ENCODE measurements at regions of chr2 and their contacts with region 1.

Region 1: DNA sequence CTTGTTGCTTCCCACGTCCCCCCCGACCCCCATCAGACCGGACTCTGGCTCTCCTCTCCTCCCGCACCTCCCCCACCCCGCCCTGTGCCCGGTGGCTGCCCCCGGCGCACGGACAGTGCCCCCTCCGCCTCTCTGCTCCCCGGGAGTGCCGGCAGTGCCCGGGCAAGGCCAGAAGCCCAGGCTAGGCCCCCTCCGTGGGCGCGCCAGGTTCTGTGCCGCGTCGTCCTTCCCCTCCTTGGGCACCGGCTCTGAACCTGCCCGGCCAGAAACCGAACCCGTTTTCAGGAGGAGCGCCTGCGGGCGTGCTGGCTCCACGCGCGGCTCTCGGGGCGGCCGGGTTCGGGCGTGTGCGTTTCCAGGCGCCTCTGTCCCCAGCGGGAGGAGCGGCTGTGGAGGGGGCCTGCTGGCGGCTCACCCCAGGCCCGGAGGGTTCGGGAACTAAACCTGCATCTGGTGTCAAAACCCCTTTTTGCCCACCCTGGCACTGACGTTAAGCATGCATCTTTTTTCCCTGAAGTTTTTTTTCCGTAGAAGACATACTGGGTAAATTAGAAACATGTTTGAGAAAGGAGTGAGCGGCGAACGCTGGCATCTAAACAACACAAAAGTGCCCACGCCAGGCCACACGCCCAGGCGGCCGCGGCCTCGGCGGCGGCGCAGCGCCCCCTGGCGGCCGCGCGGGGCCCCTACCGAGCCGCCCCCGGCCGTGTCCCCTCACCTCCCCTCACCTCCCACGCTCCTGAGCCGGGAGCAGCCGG is 123.9 kb upstream of the SLC1A4 start:
- DNase-seq: peak; percentile 63
- H3K4me3 ChIP-seq: peak overlapping the region; percentile 44 to 54
- H3K27ac ChIP-seq: peak overlapping the region; percentile 86 to 87
- H3K4me1 ChIP-seq: peaks cover 4% of the 10 kb centered on the region
- H3K27me3 ChIP-seq: no peaks in the 10 kb centered on the region
- CTCF ChIP-seq: peak; percentile 73 to 99 (median 96)
- POLR2A ChIP-seq: no peak

Region 2: DNA sequence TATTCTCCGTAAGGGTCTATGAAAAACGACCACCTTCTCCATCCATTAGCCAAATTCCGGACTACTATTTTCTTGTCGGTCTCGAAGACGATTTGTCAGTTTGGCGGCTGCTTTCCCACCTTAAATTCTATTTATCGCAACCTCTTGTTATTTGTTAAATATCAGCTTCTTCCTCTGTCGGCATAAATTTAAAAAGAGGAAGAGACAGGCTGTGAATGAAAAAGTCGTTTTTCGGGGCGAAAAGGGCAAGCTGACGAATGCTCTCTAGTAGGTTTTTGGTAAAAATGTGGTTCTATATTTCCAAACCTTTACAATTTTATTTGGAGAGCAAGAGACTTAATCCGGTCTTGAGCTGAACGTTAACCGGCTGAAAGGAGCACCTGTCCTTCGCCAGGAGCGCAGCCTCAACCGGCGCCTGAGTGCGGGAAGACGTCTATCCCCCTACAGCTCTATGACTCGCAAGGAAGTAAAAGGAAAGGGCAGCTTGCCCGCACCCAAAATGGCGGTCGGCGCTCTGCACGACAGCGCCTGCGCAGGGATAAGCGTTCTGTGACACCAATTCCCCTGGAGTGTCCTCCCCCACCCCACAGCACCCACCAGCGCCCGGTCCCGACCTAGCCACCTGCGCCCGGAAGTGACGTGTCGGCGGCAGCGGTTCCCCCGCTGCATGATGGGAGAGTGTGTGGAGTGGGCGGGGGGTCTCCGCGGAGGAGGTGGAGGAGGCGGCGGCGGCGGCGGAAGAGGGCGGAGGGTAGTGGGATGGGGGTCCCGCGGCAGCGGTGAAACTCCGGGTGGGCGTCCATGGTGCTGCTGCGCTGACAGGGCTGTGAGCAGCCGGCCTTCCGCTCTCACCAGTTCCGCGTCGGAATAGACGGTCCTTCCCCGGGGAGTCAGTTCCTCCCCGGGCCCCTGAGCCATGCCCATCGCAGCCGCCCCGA is 341.3 kb before region 1 on chr2 and contains the start of gene AFTPH:
- intact Hi-C with region 1: loop called (anchors 2 kb)
- DNase-seq: peak; percentile 99
- H3K4me3 ChIP-seq: peak within 1 kb of the TSS; percentile 76 to 94
- H3K27ac ChIP-seq: peak within 1 kb of the TSS; percentile 92 to 95
- H3K4me1 ChIP-seq: no peaks in the 10 kb centered on the region
- H3K27me3 ChIP-seq: no peaks in the 10 kb centered on the region
- CTCF ChIP-seq: peak in 1 of 4 experiments; percentile 36
- POLR2A ChIP-seq: peak; percentile 92
- total RNA-seq, gene AFTPH: 61.3 to 68.1 TPM

Region 3: GRCh38 chr2:64586883-64587481 is 278.3 kb before region 1 on chr2:
- intact Hi-C with region 1: loop called (anchors 2 kb)
- DNase-seq: no peak
- H3K4me3 ChIP-seq: no peak overlapping the region
- H3K27ac ChIP-seq: no peak overlapping the region
- H3K4me1 ChIP-seq: no peaks in the 10 kb centered on the region
- H3K27me3 ChIP-seq: no peaks in the 10 kb centered on the region
- CTCF ChIP-seq: peak in 3 of 4 experiments; percentile 48 to 76 (median 71)
- POLR2A ChIP-seq: no peak

Region 4: DNA sequence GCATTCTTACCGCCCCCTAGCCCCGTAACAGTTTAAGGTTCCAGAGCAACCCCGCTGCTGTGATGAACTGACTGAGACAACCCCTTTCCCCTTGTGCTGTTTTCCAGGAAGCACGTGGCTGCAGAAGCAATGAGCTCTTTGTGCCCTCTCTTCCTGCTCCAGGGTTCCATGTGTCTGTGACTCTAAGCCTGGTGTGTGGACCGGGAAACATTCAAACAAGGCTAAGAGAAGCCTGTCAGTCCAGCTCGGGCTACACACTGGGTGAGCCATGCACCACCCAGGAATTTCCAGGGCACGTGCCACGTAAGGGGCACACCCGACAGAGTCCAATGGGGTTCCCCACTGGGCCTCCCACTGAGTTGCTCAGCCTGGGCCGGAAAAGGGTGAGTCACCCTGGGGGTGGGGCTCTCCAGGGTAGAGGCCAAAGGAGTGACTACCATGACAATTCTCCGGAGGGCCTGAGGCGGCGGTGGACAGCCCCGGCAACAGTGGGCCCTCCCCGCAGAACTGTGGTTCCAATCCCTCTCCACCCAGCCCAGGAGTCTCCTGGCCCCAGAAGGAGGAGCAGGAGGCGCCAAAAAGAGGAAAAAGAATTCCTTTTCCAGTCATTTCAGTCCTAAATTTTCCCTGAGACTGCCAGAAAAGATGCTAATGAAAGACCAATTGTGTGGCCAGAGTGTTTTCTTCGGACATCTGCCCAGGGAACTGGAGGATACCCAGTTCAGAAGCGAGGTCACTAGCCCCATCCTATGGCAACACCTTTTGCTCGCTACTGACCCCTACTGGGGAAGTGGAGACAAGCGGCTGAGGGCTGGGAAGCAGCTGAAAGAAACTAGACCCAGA is 33.9 kb before region 1 on chr2:
- intact Hi-C with region 1: loop called (anchors 5 kb)
- DNase-seq: peak; percentile 36
- H3K4me3 ChIP-seq: no peak overlapping the region
- H3K27ac ChIP-seq: no peak overlapping the region
- H3K4me1 ChIP-seq: no peaks in the 10 kb centered on the region
- H3K27me3 ChIP-seq: no peaks in the 10 kb centered on the region
- CTCF ChIP-seq: peak in 3 of 4 experiments; percentile 48 to 61 (median 54)
- POLR2A ChIP-seq: no peak

Measured in prostate gland (tissue), 2 donors.